ENCODE measurements at regions of chr11 and their contacts with region 1.

Region 1: DNA sequence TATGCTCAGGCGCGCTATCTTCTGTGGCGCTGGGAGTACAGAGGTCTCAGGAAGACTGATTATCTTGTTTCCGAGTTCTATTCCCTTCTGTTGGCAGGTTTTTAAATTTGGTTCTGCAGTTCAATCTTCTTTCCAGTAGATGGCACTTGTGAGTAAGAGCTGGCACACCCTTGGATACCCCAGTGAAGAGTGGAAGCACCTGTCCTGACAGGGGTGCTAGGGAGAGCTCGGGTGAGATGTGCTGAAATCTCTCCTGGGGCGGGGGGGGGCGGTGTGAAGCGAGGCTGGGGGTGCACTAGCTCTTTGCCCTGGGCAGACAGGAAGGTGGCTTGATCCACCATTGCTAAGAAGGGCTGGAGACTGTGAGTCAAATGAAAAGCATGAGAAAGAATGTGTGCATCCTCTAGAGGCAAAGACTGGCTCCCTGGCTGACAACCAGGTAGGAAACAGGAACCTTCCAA is 679.9 kb upstream of the CCDC179 start:
- DNase-seq: peak; percentile 18
- H3K4me3 ChIP-seq: no peak overlapping the region
- H3K27ac ChIP-seq: no peak overlapping the region
- H3K27me3 ChIP-seq: no peaks in the 10 kb centered on the region
- CTCF ChIP-seq: peak; percentile 86

Region 2: GRCh38 chr11:23112987-23113886 is 426.9 kb before region 1 on chr11:
- CTCF ChIA-PET with region 1: interaction called, 16 read pairs
- POLR2A ChIA-PET with region 1: no interaction called
- DNase-seq: no peak
- H3K4me3 ChIP-seq: no peak overlapping the region
- H3K27ac ChIP-seq: no peak overlapping the region
- H3K27me3 ChIP-seq: no peaks in the 10 kb centered on the region
- CTCF ChIP-seq: peak; percentile 74

Region 3: GRCh38 chr11:23211221-23211620 is 328.9 kb before region 1 on chr11:
- CTCF ChIA-PET with region 1: no interaction called
- POLR2A ChIA-PET with region 1: no interaction called
- DNase-seq: no peak
- H3K4me3 ChIP-seq: no peak overlapping the region
- H3K27ac ChIP-seq: no peak overlapping the region
- H3K27me3 ChIP-seq: no peaks in the 10 kb centered on the region
- CTCF ChIP-seq: no peak

Region 4: GRCh38 chr11:23336961-23337360 is 203.2 kb before region 1 on chr11:
- CTCF ChIA-PET with region 1: no interaction called
- POLR2A ChIA-PET with region 1: no interaction called
- DNase-seq: no peak
- H3K4me3 ChIP-seq: no peak overlapping the region
- H3K27ac ChIP-seq: no peak overlapping the region
- H3K27me3 ChIP-seq: no peaks in the 10 kb centered on the region
- CTCF ChIP-seq: no peak

Region 5: GRCh38 chr11:23520226-23520960 is 19.7 kb before region 1 on chr11:
- CTCF ChIA-PET with region 1: interaction called, 23 read pairs
- POLR2A ChIA-PET with region 1: no interaction called
- DNase-seq: no peak
- H3K4me3 ChIP-seq: no peak overlapping the region
- H3K27ac ChIP-seq: no peak overlapping the region
- H3K27me3 ChIP-seq: no peaks in the 10 kb centered on the region
- CTCF ChIP-seq: no peak

Region 6: GRCh38 chr11:23554000-23554399 is 13.9 kb after region 1 on chr11:
- CTCF ChIA-PET with region 1: interaction called, 14 read pairs
- POLR2A ChIA-PET with region 1: no interaction called
- DNase-seq: no peak
- H3K4me3 ChIP-seq: no peak overlapping the region
- H3K27ac ChIP-seq: no peak overlapping the region
- H3K27me3 ChIP-seq: no peaks in the 10 kb centered on the region
- CTCF ChIP-seq: no peak

Region 7: DNA sequence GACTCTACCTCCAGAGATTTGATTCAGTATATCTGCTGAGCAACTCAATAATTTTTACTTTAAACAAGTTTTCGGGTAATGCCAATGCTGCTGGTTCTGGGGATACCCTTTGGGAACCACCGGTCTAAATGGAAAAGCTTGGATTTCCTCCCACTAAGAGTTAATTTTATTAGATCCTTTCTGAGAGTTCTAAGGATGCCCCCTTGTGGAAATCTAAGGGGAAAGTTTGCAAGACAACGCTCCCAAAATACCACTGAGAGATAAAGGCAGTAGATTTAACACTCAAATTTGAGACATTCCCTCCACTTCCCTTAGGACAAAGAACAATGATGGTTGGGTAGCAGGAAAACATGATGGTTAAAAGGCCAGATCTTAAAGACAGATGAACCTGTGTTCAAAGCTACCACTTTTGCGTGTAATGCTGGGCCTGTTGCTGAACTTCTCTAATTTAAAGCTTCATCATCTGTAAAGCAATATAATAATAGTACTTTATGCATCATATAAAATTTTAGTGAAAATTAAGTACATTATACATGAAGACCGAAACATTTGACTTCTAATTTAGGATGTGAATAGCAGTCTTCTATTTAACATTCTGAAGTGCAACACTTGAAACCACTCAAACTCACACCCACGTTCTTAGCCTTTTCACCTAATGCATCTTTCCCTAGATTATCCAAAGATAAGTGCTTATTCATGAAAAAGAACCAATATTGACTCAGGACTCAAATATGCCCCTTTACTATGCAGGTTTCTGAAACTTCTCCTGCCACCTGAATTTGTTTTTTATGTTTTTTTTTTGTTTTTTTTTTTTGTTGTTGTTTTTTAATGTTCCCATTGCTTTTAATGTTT is 846.6 kb after region 1 on chr11:
- CTCF ChIA-PET with region 1: interaction called, 10 read pairs
- POLR2A ChIA-PET with region 1: no interaction called
- DNase-seq: peak; percentile 24
- H3K4me3 ChIP-seq: no peak overlapping the region
- H3K27ac ChIP-seq: no peak overlapping the region
- H3K27me3 ChIP-seq: no peaks in the 10 kb centered on the region
- CTCF ChIP-seq: peak; percentile 70